ENCODE measurements at regions of chrX and their contacts with region 1.

Region 1: GRCh38 chrX:154515878-154516655 is at the start of gene FAM3A:
- DNase-seq: peak; percentile 95
- H3K4me3 Mint-ChIP-seq: peak within 1 kb of the TSS; percentile 83
- H3K27ac Mint-ChIP-seq: peak within 1 kb of the TSS; percentile 79
- H3K4me1 Mint-ChIP-seq: peaks cover 23% of the 10 kb centered on the region
- H3K27me3 Mint-ChIP-seq: no peaks in the 10 kb centered on the region
- total RNA-seq, gene FAM3A: 17.8 to 21.4 TPM

Region 2: GRCh38 chrX:154321594-154321993 is 194.5 kb before region 1 on chrX:
- CTCF ChIA-PET with region 1: no interaction called
- intact Hi-C with region 1: no loop called
- DNase-seq: peak; percentile 47
- H3K4me3 Mint-ChIP-seq: no peak overlapping the region
- H3K27ac Mint-ChIP-seq: no peak overlapping the region
- H3K4me1 Mint-ChIP-seq: peaks cover 35% of the 10 kb centered on the region
- H3K27me3 Mint-ChIP-seq: no peaks in the 10 kb centered on the region

Region 3: GRCh38 chrX:154378782-154379591 is 137.1 kb before region 1 on chrX and contains the start of gene EMD:
- CTCF ChIA-PET with region 1: no interaction called
- intact Hi-C with region 1: loop called (anchors 5 kb)
- DNase-seq: peak; percentile 97
- H3K4me3 Mint-ChIP-seq: peak within 1 kb of the TSS; percentile 80
- H3K27ac Mint-ChIP-seq: peak within 1 kb of the TSS; percentile 86
- H3K4me1 Mint-ChIP-seq: peaks cover 14% of the 10 kb centered on the region
- H3K27me3 Mint-ChIP-seq: no peaks in the 10 kb centered on the region
- total RNA-seq, gene EMD: 62.7 to 70.0 TPM

Measured in activated naive CD4-positive, alpha-beta T cell treated with anti-CD3 and anti-CD28 coated beads for 36 hours (primary cell).